Posterior vena cava (tissue), 2 donors: ENCODE measurements at regions of chr2 and their contacts with region 1.

Region 1: GRCh38 chr2:10408649-10409579 is 39.2 kb downstream of the ODC1 start:
- DNase-seq: peak; percentile 93

Region 2: GRCh38 chr2:10302479-10303180 is 106.3 kb before region 1 on chr2 and contains the start of gene HPCAL1:
- intact Hi-C with region 1: loop called in 1 of 2 experiments (anchors 5 kb)
- DNase-seq: peak; percentile 95
- total RNA-seq, gene HPCAL1: 21.6 to 26.0 TPM